ENCODE measurements at regions of chr22 and their contacts with region 1.

Region 1: GRCh38 chr22:44166493-44167276 is 14.0 kb upstream of the PARVG start:
- DNase-seq: peak in 1 of 2 donors; percentile 48
- ATAC-seq: no peak
- H3K4me3 ChIP-seq: no peak overlapping the region
- H3K27ac ChIP-seq: no peak overlapping the region
- H3K4me1 ChIP-seq: no peaks in the 10 kb centered on the region
- H3K27me3 ChIP-seq: no peaks in the 10 kb centered on the region
- CTCF ChIP-seq: no peak

Region 2: DNA sequence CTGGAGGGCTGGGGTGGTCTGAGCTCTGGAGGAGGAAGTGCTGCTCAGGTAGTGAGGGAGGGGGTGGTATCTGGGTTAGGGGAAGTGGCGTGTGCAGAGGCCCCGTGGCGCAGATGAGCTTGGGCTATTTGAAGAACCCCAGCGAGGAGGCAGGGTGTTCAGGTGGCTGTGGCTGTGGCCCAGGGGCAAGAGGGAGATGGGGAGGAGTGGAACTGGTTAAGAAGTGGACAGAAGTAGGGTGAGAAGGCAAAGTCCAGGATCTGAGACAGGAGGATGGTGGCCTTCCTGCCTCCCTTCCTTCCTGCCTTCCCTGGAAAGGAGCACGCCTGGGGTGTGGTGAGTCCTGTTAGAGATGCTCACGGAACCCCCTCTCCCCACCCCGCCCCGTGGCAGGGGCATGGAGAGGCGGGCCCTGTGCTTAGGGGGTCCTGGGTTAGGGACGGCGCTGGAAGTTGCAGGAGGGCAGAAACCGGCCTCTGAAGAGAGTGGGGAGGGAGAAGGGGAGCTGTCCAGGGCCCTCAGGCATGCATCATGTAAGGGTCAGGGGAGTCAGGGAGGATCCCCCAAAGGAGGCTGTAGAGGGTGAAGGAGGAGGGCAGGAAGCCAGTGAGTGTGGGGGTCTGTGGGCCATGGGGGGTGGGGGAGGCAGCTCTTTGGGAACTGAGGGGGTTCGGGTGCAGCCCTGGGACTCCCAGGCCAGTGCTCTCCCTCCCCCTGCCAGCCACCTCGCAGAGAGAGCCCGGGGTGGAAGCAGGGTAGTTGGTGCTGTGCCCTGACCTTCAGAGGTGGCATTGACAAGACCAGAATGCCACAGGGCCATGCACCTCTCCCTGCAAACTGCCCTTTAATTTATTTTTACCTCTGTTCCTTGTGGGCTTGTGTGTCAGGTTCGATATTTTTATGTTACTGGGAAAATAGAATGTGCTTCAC is 49.7 kb before region 1 on chr22:
- intact Hi-C with region 1: loop called in 1 of 2 experiments (anchors 5 kb)
- DNase-seq: peak in 1 of 2 donors; percentile 32
- ATAC-seq: peak in 3 of 4 donors; percentile 42 to 55 (median 52)
- H3K4me3 ChIP-seq: no peak overlapping the region
- H3K27ac ChIP-seq: no peak overlapping the region
- H3K4me1 ChIP-seq: peaks cover 15% of the 10 kb centered on the region
- H3K27me3 ChIP-seq: no peaks in the 10 kb centered on the region
- CTCF ChIP-seq: no peak

Region 3: GRCh38 chr22:44391481-44392445 is 225.1 kb after region 1 on chr22:
- intact Hi-C with region 1: no loop called
- DNase-seq: peak; percentile 0 to 6
- ATAC-seq: no peak
- H3K4me3 ChIP-seq: no peak overlapping the region
- H3K27ac ChIP-seq: no peak overlapping the region
- H3K4me1 ChIP-seq: no peaks in the 10 kb centered on the region
- H3K27me3 ChIP-seq: peaks cover 0 to 32% (median 5%) of the 10 kb centered on the region in 3 donors
- CTCF ChIP-seq: no peak

Measured in psoas muscle (tissue), 8 donors.